ENCODE measurements at regions of chr17 and their contacts with region 1.

Region 1: GRCh38 chr17:50478391-50479381 is at the start of gene RSAD1:
- DNase-seq: peak; percentile 95
- H3K4me3 Mint-ChIP-seq: peak within 1 kb of the TSS; percentile 86
- H3K27ac Mint-ChIP-seq: peak within 1 kb of the TSS; percentile 91
- H3K4me1 Mint-ChIP-seq: peaks cover 13% of the 10 kb centered on the region
- H3K27me3 Mint-ChIP-seq: peaks cover 4% of the 10 kb centered on the region
- total RNA-seq, gene RSAD1: 53.6 and 61.2 TPM in 2 replicates

Region 2: DNA sequence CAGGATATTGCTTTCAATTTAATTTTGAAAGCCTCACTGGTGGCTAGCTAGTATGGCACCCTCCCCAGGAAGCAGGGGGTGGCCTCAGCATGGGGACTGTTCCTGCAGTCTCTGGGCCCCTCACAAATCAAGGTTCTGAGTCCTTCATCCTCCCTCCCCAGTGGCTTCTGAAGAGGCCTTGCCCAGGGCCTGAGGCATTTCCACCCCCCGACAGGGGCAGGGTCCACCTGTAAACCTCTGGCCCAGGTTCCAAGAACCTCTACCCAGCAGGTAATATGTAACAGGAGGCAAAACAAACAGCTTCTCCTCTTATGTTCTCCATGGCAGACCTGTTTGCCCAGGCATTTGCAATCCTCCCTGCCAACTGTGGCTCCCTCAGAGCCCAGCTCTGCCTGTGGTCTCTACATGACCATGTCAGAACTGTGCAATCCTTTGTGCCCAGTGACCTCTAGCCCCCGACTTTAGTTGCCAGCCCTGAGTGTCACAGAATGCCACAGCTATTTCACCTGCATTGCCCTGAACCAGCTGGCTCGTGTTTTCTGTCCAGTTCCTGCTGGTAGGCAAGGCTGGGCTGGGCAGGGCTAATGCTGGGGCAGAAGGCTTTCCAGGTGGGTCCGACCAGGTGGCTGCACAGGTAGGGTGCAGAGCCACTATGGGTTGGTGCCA is 38.4 kb before region 1 on chr17:
- intact Hi-C with region 1: no loop called
- DNase-seq: no peak
- H3K4me3 Mint-ChIP-seq: no peak overlapping the region
- H3K27ac Mint-ChIP-seq: no peak overlapping the region
- H3K4me1 Mint-ChIP-seq: no peaks in the 10 kb centered on the region
- H3K27me3 Mint-ChIP-seq: no peaks in the 10 kb centered on the region

Region 3: GRCh38 chr17:50507871-50508572 is 29.3 kb after region 1 on chr17 and contains the start of gene MYCBPAP:
- intact Hi-C with region 1: loop called (anchors 2 kb)
- DNase-seq: peak; percentile 95
- H3K4me3 Mint-ChIP-seq: peak within 1 kb of the TSS; percentile 94
- H3K27ac Mint-ChIP-seq: peak within 1 kb of the TSS; percentile 91
- H3K4me1 Mint-ChIP-seq: peaks cover 55% of the 10 kb centered on the region
- H3K27me3 Mint-ChIP-seq: no peaks in the 10 kb centered on the region
- total RNA-seq, gene MYCBPAP: 3.5 TPM in 2 replicates

Region 4: DNA sequence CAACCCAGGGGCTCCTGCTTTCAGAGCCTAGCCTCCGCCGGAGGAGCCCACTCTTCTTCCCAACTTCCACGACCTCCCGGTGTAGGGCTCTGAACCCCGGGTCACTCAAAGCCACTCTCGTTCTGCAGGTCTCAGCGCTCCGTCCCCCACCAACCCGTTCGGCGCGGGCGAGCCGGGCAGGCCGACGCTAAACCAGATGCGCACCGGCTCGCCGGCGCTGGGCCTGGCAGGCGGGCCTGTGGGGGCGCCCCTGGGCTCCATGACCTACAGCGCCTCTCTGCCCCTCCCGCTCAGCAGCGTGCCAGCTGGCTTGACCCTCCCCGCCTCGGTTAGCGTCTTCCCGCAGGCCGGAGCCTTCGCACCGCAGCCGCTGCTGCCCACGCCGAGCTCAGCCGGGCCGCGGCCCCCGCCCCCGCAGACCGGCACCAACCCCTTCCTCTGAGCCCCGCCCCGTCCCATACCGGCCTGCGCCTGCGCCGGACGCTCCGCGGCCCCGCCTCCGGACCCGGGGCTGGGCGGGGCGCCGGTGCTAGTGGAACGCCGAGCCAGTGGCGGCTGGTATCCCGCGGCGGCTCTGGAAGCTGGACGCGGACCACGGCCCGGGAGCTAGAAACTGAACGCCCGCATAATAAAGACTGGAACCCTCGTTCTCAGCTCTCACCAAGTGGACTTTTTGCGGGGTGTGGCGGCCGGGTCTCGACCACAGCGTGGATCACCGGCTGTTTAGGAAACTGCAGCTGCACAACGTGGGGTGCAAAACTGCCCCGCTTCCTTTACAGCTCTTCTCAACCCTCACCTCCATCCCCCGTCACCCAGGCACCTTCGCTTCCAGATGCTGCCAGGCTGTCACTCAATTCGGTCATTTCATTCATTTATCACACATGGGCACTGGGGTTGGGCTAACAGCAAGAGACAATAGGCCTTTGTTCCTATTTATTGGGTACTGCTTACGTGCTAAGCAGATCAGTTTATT is 63.3 kb after region 1 on chr17:
- intact Hi-C with region 1: loop called (anchors 1 kb)
- DNase-seq: peak; percentile 98
- H3K4me3 Mint-ChIP-seq: peak overlapping the region; percentile 83
- H3K27ac Mint-ChIP-seq: peak overlapping the region; percentile 45
- H3K4me1 Mint-ChIP-seq: peaks cover 16% of the 10 kb centered on the region
- H3K27me3 Mint-ChIP-seq: peaks cover 19% of the 10 kb centered on the region

Region 5: GRCh38 chr17:50626037-50626574 is 147.4 kb after region 1 on chr17:
- intact Hi-C with region 1: loop called (anchors 2 kb)
- DNase-seq: peak; percentile 88
- H3K4me3 Mint-ChIP-seq: no peak overlapping the region
- H3K27ac Mint-ChIP-seq: no peak overlapping the region
- H3K4me1 Mint-ChIP-seq: peaks cover 10% of the 10 kb centered on the region
- H3K27me3 Mint-ChIP-seq: peaks cover 31% of the 10 kb centered on the region

Region 6: GRCh38 chr17:50697663-50698274 is 219.1 kb after region 1 on chr17:
- intact Hi-C with region 1: loop called (anchors 5 kb)
- DNase-seq: no peak
- H3K4me3 Mint-ChIP-seq: no peak overlapping the region
- H3K27ac Mint-ChIP-seq: no peak overlapping the region
- H3K4me1 Mint-ChIP-seq: peaks cover 31% of the 10 kb centered on the region
- H3K27me3 Mint-ChIP-seq: no peaks in the 10 kb centered on the region

Region 7: DNA sequence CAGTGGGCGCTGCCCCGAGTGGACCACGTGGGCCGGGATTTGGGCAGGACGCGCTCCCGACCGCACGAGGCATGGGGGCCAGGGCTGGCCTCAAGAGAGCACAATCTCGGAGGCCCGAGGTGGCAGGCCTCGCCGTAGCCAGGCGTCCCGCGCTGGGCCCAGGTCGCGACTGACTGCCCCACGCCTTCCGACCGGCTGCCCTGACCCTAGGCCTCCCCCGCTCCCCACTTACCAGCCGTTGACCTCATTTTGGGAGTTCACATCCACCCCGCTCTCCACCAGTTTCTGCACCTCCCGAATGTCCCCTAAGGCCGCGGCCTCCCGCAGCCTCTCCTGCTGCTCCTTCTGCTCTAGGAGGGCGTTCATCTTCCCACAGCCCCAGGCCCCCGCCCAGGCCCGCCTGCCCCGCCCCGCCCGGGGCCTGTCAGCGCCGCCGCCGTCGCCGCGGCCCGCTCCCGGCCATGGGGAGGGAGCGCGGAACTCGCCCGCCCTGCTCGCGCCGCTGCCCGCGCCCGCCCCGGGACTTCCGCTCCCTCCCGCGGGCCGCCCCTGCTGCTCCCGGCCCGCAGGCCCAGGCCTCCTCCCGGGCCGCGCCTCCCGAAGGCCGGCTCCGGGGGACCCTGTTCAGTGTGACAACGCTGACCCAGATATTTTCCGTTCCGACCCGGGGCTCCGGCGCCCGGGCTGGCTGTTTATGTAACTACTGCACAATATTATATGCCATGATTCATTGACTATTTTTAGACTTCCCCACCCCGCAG is 228.8 kb after region 1 on chr17 and contains the start of gene ANKRD40:
- intact Hi-C with region 1: loop called (anchors 5 kb)
- DNase-seq: peak; percentile 98
- H3K4me3 Mint-ChIP-seq: peak within 1 kb of the TSS; percentile 86
- H3K27ac Mint-ChIP-seq: peak within 1 kb of the TSS; percentile 98
- H3K4me1 Mint-ChIP-seq: peaks cover 33% of the 10 kb centered on the region
- H3K27me3 Mint-ChIP-seq: peaks cover 2% of the 10 kb centered on the region
- total RNA-seq, gene ANKRD40: 47.7 and 49.8 TPM in 2 replicates

Measured in activated CD4-positive, alpha-beta T cell treated with anti-CD3 and anti-CD28 coated beads, Interleukin-2, amount 10 ng/mL, durations not matched to agents 24 days and 14 days (primary cell).